ENCODE measurements at regions of chr16 and their contacts with region 1.

Region 1: GRCh38 chr16:13919683-13920509 is at the start of gene ERCC4:
- DNase-seq: peak; percentile 97 to 100 (median 99)
- ATAC-seq: peak; percentile 94
- H3K4me3 ChIP-seq: peak within 1 kb of the TSS; percentile 78 to 91
- H3K4me3 Mint-ChIP-seq: peak within 1 kb of the TSS; percentile 90
- H3K27ac ChIP-seq: peak within 1 kb of the TSS; percentile 68 to 84
- H3K27ac Mint-ChIP-seq: peak within 1 kb of the TSS; percentile 88
- H3K4me1 ChIP-seq: peaks cover 13% of the 10 kb centered on the region
- H3K4me1 Mint-ChIP-seq: peaks cover 26% of the 10 kb centered on the region
- H3K27me3 ChIP-seq: no peaks in the 10 kb centered on the region
- H3K27me3 Mint-ChIP-seq: no peaks in the 10 kb centered on the region
- CTCF ChIP-seq: peak; percentile 74
- total RNA-seq, gene ERCC4: 8.0 to 10.6 TPM

Region 2: DNA sequence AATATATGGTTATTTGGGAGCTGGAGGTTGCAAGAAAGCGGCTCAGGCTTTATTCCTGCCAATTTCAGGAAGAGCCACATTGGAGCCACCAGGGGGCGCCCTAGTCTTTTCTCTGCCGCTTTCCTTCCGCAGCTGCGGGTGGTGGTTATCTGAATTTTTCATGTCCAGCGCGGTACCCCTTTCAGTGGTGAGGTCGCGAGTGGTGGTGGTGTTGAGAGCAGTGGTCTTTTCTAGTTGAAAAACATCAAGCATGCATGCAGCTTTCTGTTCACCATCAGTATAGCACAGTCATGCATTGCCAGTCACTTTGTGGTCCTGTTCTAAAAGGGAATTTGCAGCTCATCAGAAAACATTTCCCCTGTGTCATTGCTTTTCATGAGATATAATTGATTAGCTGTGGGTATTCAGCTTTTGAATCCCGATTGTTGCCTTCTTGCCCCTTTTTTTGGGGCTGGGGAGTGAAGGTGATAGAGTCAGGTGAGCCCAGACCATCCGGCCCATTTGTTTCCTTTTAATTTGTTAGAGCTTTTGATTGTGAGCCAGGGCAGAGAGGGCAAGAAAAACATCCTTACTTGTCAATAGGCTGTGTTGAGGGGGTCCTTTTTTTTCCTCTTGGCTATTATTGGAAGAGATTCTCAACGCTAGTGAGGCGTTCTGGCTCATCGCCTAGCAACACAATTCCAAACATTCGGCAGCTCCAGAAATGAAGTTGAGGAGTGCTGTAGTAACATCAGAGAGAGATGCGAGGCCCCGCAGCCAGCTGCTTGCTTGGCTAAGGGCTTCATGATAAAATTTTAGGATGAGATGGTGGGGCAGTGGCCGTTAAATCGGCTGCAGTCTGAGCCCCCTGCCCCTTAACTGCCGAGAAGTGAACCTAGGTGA is 1824.4 kb before region 1 on chr16:
- CTCF ChIA-PET with region 1: no interaction called
- POLR2A ChIA-PET with region 1: no interaction called
- intact Hi-C with region 1: loop called (anchors 5 to 10 kb)
- DNase-seq: peak in 8 of 9 experiments; percentile 50 to 83 (median 71)
- ATAC-seq: peak; percentile 48
- H3K4me3 ChIP-seq: peak overlapping the region; percentile 10 to 15
- H3K4me3 Mint-ChIP-seq: peak overlapping the region; percentile 73
- H3K27ac ChIP-seq: no peak overlapping the region
- H3K27ac Mint-ChIP-seq: peak overlapping the region; percentile 12
- H3K4me1 ChIP-seq: peaks cover 9% of the 10 kb centered on the region
- H3K4me1 Mint-ChIP-seq: peaks cover 35% of the 10 kb centered on the region
- H3K27me3 ChIP-seq: no peaks in the 10 kb centered on the region
- H3K27me3 Mint-ChIP-seq: no peaks in the 10 kb centered on the region
- CTCF ChIP-seq: peak; percentile 94

Region 3: GRCh38 chr16:12803203-12804097 is 1116.4 kb before region 1 on chr16 and contains the start of gene CPPED1:
- CTCF ChIA-PET with region 1: no interaction called
- POLR2A ChIA-PET with region 1: no interaction called
- intact Hi-C with region 1: loop called (anchors 2 to 5 kb)
- DNase-seq: peak; percentile 83 to 95 (median 88)
- ATAC-seq: peak; percentile 94
- H3K4me3 ChIP-seq: peak within 1 kb of the TSS; percentile 71 to 86
- H3K4me3 Mint-ChIP-seq: peak within 1 kb of the TSS; percentile 88
- H3K27ac ChIP-seq: peak within 1 kb of the TSS; percentile 55 to 87
- H3K27ac Mint-ChIP-seq: peak within 1 kb of the TSS; percentile 92
- H3K4me1 ChIP-seq: peaks cover 9% of the 10 kb centered on the region
- H3K4me1 Mint-ChIP-seq: peaks cover 22% of the 10 kb centered on the region
- H3K27me3 ChIP-seq: no peaks in the 10 kb centered on the region
- H3K27me3 Mint-ChIP-seq: peaks cover 3% of the 10 kb centered on the region
- CTCF ChIP-seq: no peak
- total RNA-seq, gene CPPED1: 0.89 to 1.1 TPM

Region 4: DNA sequence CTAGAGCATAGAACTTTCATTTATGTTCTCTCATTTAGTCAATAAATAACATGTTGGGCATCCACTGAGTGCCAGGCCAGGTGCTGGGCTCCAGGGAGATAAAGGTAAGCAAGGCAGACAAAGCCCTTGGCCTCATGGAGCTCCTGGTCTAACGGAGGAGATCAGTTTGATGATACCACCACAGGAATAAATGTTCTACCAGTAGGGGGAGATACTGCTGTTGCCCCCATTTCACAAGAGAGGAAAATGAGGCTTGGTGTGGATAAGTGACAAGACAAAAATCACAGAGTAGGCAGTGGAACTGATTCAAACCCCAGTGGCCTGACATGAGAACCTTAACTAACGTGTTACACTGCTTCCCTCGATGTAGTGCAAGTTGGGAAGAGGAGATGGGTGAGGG is 80.3 kb before region 1 on chr16:
- CTCF ChIA-PET with region 1: no interaction called
- POLR2A ChIA-PET with region 1: no interaction called
- intact Hi-C with region 1: no loop called
- DNase-seq: no peak
- ATAC-seq: no peak
- H3K4me3 ChIP-seq: no peak overlapping the region
- H3K4me3 Mint-ChIP-seq: no peak overlapping the region
- H3K27ac ChIP-seq: no peak overlapping the region
- H3K27ac Mint-ChIP-seq: no peak overlapping the region
- H3K4me1 ChIP-seq: no peaks in the 10 kb centered on the region
- H3K4me1 Mint-ChIP-seq: no peaks in the 10 kb centered on the region
- H3K27me3 ChIP-seq: no peaks in the 10 kb centered on the region
- H3K27me3 Mint-ChIP-seq: peaks cover 8% of the 10 kb centered on the region
- CTCF ChIP-seq: no peak

Region 5: GRCh38 chr16:13856398-13856797 is 63.5 kb before region 1 on chr16:
- CTCF ChIA-PET with region 1: no interaction called
- POLR2A ChIA-PET with region 1: no interaction called
- intact Hi-C with region 1: no loop called
- DNase-seq: no peak
- ATAC-seq: no peak
- H3K4me3 ChIP-seq: no peak overlapping the region
- H3K4me3 Mint-ChIP-seq: no peak overlapping the region
- H3K27ac ChIP-seq: no peak overlapping the region
- H3K27ac Mint-ChIP-seq: no peak overlapping the region
- H3K4me1 ChIP-seq: no peaks in the 10 kb centered on the region
- H3K4me1 Mint-ChIP-seq: no peaks in the 10 kb centered on the region
- H3K27me3 ChIP-seq: no peaks in the 10 kb centered on the region
- H3K27me3 Mint-ChIP-seq: peaks cover 33% of the 10 kb centered on the region
- CTCF ChIP-seq: no peak

Region 6: GRCh38 chr16:13896543-13897183 is 23.2 kb before region 1 on chr16:
- CTCF ChIA-PET with region 1: no interaction called
- POLR2A ChIA-PET with region 1: no interaction called
- intact Hi-C with region 1: no loop called
- DNase-seq: no peak
- ATAC-seq: no peak
- H3K4me3 ChIP-seq: no peak overlapping the region
- H3K4me3 Mint-ChIP-seq: no peak overlapping the region
- H3K27ac ChIP-seq: no peak overlapping the region
- H3K27ac Mint-ChIP-seq: no peak overlapping the region
- H3K4me1 ChIP-seq: no peaks in the 10 kb centered on the region
- H3K4me1 Mint-ChIP-seq: no peaks in the 10 kb centered on the region
- H3K27me3 ChIP-seq: no peaks in the 10 kb centered on the region
- H3K27me3 Mint-ChIP-seq: peaks cover 24% of the 10 kb centered on the region
- CTCF ChIP-seq: no peak

Region 7: DNA sequence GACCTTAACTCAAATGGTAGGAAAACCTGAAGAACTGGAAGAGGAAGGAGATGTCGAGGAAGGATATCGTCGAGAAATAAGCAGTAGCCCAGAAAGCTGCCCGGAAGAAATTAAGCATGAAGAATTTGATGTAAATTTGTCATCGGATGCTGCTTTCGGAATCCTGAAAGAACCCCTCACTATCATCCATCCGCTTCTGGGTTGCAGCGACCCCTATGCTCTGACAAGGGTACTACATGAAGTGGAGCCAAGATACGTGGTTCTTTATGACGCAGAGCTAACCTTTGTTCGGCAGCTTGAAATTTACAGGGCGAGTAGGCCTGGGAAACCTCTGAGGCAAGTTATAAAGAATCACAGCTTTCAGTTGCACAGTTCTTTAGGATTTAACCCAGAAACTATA is 15.5 kb after region 1 on chr16:
- CTCF ChIA-PET with region 1: interaction called, 20 read pairs
- POLR2A ChIA-PET with region 1: interaction called, 4 read pairs
- intact Hi-C with region 1: no loop called
- DNase-seq: peak in 3 of 9 experiments; percentile 13 to 41 (median 32)
- ATAC-seq: no peak
- H3K4me3 ChIP-seq: no peak overlapping the region
- H3K4me3 Mint-ChIP-seq: no peak overlapping the region
- H3K27ac ChIP-seq: no peak overlapping the region
- H3K27ac Mint-ChIP-seq: no peak overlapping the region
- H3K4me1 ChIP-seq: no peaks in the 10 kb centered on the region
- H3K4me1 Mint-ChIP-seq: peaks cover 4% of the 10 kb centered on the region
- H3K27me3 ChIP-seq: no peaks in the 10 kb centered on the region
- H3K27me3 Mint-ChIP-seq: no peaks in the 10 kb centered on the region
- CTCF ChIP-seq: peak; percentile 70

Region 8: DNA sequence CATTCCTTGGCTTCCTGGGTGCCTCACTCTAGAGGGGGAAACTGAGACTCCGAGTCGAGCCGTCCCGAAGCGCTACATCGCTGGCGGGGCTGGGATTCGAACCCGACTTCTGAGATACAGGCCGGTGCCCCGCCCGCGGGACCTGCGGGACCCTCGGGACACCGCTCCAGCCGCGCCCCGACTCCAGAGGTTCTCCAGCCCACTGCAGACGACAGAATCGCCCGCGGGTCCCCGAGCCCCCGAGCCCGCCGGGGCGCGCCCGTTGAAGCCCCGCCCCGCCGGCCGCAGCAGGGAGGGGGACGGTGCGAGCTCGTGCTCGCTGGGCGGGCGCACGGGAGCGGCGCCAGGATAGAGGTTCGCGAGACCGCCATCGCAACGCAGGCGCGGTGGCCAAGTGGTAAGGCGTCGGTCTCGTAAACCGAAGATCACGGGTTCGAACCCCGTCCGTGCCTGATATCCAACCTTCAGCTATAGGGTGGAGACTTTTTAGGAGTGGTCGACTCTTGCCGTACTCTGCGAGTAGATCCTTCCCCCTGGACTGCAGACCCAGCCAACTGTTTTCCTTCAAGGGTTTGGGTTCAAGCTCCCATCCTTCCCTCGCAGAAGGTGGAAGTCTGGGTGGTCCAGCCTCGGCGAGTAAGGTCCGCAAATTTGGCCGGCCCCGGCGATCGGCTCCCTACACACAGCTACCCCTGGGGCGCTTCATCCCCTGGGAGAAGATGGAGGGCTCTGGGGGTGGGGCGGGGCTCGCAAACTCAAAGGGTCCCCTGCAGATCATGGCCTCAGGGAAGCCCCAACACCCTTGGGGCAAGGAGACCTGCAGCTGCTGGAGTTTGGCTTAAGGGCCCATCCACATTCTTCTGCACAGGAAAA is 365.9 kb after region 1 on chr16:
- CTCF ChIA-PET with region 1: interaction called, 12 read pairs
- POLR2A ChIA-PET with region 1: interaction called, 4 read pairs
- intact Hi-C with region 1: loop called (anchors 1 to 2 kb)
- DNase-seq: peak; percentile 91 to 100 (median 96)
- ATAC-seq: peak; percentile 80
- H3K4me3 ChIP-seq: peak overlapping the region; percentile 95 to 96
- H3K4me3 Mint-ChIP-seq: peak overlapping the region; percentile 91
- H3K27ac ChIP-seq: peak overlapping the region; percentile 57 to 63
- H3K27ac Mint-ChIP-seq: peak overlapping the region; percentile 91
- H3K4me1 ChIP-seq: peaks cover 9% of the 10 kb centered on the region
- H3K4me1 Mint-ChIP-seq: peaks cover 15% of the 10 kb centered on the region
- H3K27me3 ChIP-seq: no peaks in the 10 kb centered on the region
- H3K27me3 Mint-ChIP-seq: no peaks in the 10 kb centered on the region
- CTCF ChIP-seq: no peak

Region 9: DNA sequence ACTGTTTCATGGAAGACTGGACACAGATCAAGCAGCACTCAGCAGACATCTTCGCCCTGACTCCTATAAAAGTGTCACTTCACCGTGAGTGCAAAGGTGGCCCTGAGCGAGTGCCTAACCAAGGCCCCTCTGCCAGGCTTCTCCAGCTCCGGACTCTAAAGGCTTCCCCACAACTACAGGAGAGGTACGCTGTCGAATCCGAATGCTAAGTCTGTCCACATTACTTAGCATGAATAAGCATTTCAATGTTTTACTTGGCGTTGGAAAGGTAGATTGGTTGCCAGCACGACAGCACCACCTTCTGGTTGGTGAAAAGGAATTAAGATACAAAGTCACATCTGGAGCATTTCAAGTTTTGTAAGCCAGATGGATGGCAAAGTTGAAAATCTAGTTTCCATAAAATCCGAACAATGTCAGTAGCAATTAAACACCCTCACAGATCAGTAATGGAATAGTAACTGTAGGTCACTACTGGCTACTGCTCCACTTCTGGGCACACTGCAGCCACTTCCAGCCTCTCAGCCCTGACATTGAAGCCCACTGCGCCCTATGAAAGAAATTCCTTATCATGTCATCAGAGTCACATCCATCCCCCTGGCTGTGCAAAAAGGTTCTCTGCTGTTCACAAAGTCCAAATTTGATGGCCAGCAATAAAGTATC is 609.2 kb after region 1 on chr16:
- CTCF ChIA-PET with region 1: interaction called, 17 read pairs
- POLR2A ChIA-PET with region 1: no interaction called
- intact Hi-C with region 1: loop called (anchors 1 to 5 kb)
- DNase-seq: peak; percentile 10 to 72 (median 48)
- ATAC-seq: peak; percentile 40
- H3K4me3 ChIP-seq: no peak overlapping the region
- H3K4me3 Mint-ChIP-seq: no peak overlapping the region
- H3K27ac ChIP-seq: no peak overlapping the region
- H3K27ac Mint-ChIP-seq: no peak overlapping the region
- H3K4me1 ChIP-seq: no peaks in the 10 kb centered on the region
- H3K4me1 Mint-ChIP-seq: no peaks in the 10 kb centered on the region
- H3K27me3 ChIP-seq: no peaks in the 10 kb centered on the region
- H3K27me3 Mint-ChIP-seq: no peaks in the 10 kb centered on the region
- CTCF ChIP-seq: peak; percentile 73

Region 10: DNA sequence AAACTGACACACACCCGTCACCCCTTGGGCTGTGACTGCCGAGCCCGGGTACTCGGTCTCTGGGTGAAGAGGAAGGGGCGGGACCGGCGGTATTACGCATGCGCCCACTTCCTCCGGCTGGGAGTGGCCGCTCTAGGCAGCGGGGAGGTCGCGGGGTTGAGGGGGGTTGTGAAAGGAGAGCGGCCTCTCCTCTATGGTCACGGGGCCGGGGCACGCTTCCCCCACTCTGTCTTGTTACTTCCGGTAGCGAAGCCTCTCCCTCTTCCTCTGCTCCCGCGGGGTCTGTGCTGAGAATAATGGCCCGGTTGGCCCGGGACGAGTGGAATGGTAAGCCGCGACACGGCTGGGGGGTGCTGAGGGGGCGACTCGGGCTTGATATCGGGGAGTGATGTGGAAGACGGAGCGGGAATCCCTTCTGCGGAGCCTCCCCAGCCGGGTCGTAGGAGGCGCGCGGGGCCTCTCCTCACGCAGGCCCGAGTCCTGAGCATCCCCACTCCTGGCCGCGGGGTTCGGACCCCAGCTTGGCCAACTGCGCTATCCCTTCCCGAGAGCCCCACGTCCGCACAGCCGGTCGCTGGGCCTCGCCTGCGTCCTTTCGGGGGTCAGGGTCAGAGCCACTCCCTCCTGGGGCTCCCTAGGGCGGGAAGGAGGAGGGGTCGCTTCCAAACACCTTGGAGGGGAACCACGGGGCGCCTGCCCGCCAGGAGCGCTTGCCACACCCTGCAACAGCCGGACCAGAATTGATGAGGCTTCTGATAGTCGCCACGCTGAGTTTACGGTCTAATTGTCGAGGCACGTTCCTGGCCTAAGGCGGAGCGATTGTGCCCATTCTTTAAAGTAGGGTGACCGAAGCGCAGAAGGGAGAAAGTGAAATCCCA is 713.0 kb after region 1 on chr16 and contains the start of gene BFAR:
- CTCF ChIA-PET with region 1: no interaction called
- POLR2A ChIA-PET with region 1: interaction called, 3 read pairs
- intact Hi-C with region 1: loop called (anchors 1 kb)
- DNase-seq: peak; percentile 98 to 100 (median 99)
- ATAC-seq: peak; percentile 68
- H3K4me3 ChIP-seq: peak within 1 kb of the TSS; percentile 95 to 100
- H3K4me3 Mint-ChIP-seq: peak within 1 kb of the TSS; percentile 100
- H3K27ac ChIP-seq: peak within 1 kb of the TSS; percentile 82 to 94
- H3K27ac Mint-ChIP-seq: peak within 1 kb of the TSS; percentile 99
- H3K4me1 ChIP-seq: peaks cover 60% of the 10 kb centered on the region
- H3K4me1 Mint-ChIP-seq: peaks cover 73% of the 10 kb centered on the region
- H3K27me3 ChIP-seq: no peaks in the 10 kb centered on the region
- H3K27me3 Mint-ChIP-seq: no peaks in the 10 kb centered on the region
- CTCF ChIP-seq: no peak
- total RNA-seq, gene BFAR: 34.0 to 41.7 TPM

Measured in CD8-positive, alpha-beta T cell (primary cell).